Activated CD4-positive, alpha-beta T cell treated with anti-CD3 and anti-CD28 coated beads for 36 hours (primary cell): ENCODE measurements at regions of chr1 and their contacts with region 1.

Region 1: GRCh38 chr1:54671985-54672608 is 30.5 kb downstream of the MROH7 start:
- DNase-seq: peak; percentile 84
- ATAC-seq: peak; percentile 96
- H3K4me3 Mint-ChIP-seq: no peak overlapping the region
- H3K27ac Mint-ChIP-seq: no peak overlapping the region
- H3K4me1 Mint-ChIP-seq: no peaks in the 10 kb centered on the region
- H3K27me3 Mint-ChIP-seq: no peaks in the 10 kb centered on the region

Region 2: GRCh38 chr1:54791880-54792522 is 119.9 kb after region 1 on chr1:
- CTCF ChIA-PET with region 1: interaction called, 3 read pairs
- POLR2A ChIA-PET with region 1: no interaction called
- intact Hi-C with region 1: loop called (anchors 1 kb)
- DNase-seq: peak; percentile 84
- ATAC-seq: peak; percentile 45
- H3K4me3 Mint-ChIP-seq: no peak overlapping the region
- H3K27ac Mint-ChIP-seq: peak overlapping the region; percentile 22
- H3K4me1 Mint-ChIP-seq: peaks cover 19% of the 10 kb centered on the region
- H3K27me3 Mint-ChIP-seq: no peaks in the 10 kb centered on the region

Region 3: GRCh38 chr1:54886724-54887664 is 214.9 kb after region 1 on chr1 and contains the start of gene DHCR24:
- CTCF ChIA-PET with region 1: no interaction called
- POLR2A ChIA-PET with region 1: no interaction called
- intact Hi-C with region 1: no loop called
- DNase-seq: peak; percentile 88
- ATAC-seq: peak; percentile 96
- H3K4me3 Mint-ChIP-seq: peak within 1 kb of the TSS; percentile 89
- H3K27ac Mint-ChIP-seq: peak within 1 kb of the TSS; percentile 84
- H3K4me1 Mint-ChIP-seq: peaks cover 39% of the 10 kb centered on the region
- H3K27me3 Mint-ChIP-seq: peaks cover 8% of the 10 kb centered on the region
- total RNA-seq, gene DHCR24: 78.4 to 80.6 TPM

Region 4: GRCh38 chr1:54996359-54996868 is 324.3 kb after region 1 on chr1:
- CTCF ChIA-PET with region 1: no interaction called
- POLR2A ChIA-PET with region 1: no interaction called
- intact Hi-C with region 1: loop called in 1 of 2 experiments (anchors 1 kb)
- DNase-seq: peak; percentile 92
- ATAC-seq: peak; percentile 96
- H3K4me3 Mint-ChIP-seq: peak overlapping the region; percentile 24
- H3K27ac Mint-ChIP-seq: no peak overlapping the region
- H3K4me1 Mint-ChIP-seq: peaks cover 14% of the 10 kb centered on the region
- H3K27me3 Mint-ChIP-seq: peaks cover 37% of the 10 kb centered on the region

Region 5: DNA sequence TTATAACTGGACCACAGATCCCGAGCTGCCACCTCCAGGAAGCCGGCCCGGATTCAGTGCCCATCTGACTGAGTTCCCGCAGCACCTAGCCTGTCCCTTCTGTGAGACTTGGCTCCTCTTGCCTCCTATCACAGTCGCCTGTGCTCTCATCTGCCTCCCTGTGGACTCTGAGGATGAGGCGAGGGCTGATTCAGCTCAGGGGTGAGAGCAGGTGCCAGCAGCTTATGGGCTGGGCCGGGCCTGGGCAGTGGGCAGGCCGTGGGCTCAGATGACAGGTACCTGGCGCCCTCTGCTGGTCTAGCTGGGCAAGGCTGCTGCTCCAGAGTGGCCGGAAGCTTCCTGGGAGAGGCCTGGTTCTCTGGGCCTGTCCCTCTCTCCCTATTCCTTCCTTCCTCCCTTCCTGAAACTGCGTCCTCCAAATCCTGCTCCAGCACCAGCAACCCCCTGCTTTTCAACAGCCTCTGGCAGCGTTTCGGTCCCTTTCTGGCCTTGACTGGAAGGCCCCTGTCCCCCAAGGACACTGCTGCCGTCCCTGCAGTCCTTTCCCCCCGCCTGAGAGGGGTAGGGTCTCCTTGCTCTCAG is 350.0 kb after region 1 on chr1:
- CTCF ChIA-PET with region 1: no interaction called
- POLR2A ChIA-PET with region 1: no interaction called
- intact Hi-C with region 1: loop called in 1 of 2 experiments (anchors 1 kb)
- DNase-seq: peak; percentile 88
- ATAC-seq: peak; percentile 99
- H3K4me3 Mint-ChIP-seq: no peak overlapping the region
- H3K27ac Mint-ChIP-seq: no peak overlapping the region
- H3K4me1 Mint-ChIP-seq: no peaks in the 10 kb centered on the region
- H3K27me3 Mint-ChIP-seq: peaks cover 3% of the 10 kb centered on the region